Posterior cingulate gyrus (tissue), 11 donors: ENCODE measurements at regions of chr19 and their contacts with region 1.

Region 1: DNA sequence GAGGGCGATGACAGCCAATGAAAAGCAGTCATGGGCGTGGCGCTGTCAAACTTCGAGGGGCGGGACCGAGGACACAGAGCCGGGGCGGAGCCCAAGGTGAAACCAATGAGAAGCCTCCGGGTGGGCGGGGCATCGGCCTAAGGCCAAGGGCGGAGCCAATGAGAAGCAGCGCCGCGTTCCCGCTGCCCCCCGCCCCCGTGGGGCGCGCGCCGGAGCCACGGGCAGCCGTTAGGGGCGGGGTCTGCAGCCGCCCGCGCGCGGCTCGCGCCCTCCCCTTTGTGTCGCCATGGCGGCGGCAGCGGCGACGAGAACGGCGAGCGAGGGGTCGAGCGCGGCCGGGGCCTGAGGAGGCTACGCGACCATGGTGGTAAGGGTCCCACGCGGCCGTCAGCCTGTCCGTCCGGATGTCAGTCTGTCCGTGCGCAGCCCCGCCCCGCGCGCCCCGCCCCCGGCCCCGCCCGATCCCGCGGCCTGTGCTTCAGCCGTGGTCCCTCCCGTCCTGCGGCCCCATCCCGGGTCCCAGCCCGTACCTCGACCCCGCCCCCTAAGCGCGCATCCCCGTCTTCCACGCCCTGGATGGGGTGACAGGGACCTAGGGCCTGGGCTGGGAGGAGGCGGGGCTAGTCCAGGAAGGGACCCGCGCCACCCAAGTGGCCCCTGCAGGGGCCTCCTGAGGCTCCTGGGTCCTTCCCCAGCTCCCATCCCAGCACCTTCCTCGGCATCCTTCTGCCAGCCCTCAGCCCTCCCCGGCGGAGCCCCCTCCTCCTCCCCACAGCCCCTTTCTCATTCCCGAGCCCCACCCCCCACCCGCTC is at the start of gene ARHGAP33:
- DNase-seq: peak; percentile 98 to 100 (median 100)

Region 2: GRCh38 chr19:35462476-35462953 is 313.0 kb before region 1 on chr19:
- intact Hi-C with region 1: no loop called
- DNase-seq: no peak

Region 3: GRCh38 chr19:35757749-35758608 is 17.5 kb before region 1 on chr19 and contains the start of gene PROSER3:
- intact Hi-C with region 1: loop called (anchors 1 kb)
- DNase-seq: peak; percentile 97 to 100 (median 98)

Region 4: DNA sequence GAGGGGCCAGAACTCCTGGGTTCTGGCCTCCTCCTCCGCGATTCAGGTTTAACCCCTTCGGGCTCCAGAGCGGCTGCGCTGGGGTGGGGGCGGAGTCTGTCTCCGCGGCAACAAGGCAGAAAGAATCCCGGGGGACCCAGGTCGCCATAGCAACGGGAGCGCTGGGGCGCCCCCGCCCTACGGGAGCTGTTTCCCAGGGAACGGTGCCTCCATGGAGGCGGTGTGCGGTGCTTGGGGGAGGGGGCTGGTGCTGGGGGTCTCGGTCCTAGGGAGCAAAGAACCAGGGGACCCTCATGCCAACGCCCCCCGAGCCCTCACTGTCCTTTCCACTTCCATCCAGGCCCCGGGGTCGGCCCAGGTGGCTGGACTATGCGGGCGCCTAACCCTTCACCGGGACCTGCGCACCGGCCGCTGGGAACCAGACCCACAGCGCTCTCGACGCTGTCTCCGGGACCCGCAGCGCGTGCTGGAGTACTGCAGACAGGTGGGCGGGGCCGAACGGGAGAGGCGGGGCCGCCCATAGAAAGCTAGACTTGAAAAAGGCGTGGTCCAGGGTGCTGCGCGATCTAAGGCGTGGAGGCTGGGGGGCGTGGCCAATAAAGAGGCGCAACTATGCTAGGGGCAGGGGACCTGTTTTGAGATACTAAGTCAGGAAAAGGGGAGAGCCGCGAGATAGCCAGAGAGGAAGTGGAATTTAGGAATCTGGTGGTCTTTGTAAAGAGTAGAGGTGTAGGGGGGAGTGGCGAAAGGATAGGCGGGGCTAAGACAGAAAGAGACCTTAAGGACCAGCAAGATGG is 94.0 kb after region 1 on chr19:
- intact Hi-C with region 1: loop called (anchors 2 kb)
- DNase-seq: peak; percentile 74 to 99 (median 88)